GM12878 (cell line): ENCODE measurements at regions of chr20 and their contacts with region 1.

Region 1: GRCh38 chr20:32357869-32358631 is at the start of gene ASXL1:
- DNase-seq: peak; percentile 90
- ATAC-seq: peak; percentile 85
- H3K4me3 ChIP-seq: peak within 1 kb of the TSS; percentile 77
- H3K27ac ChIP-seq: peak within 1 kb of the TSS; percentile 91
- H3K4me1 ChIP-seq: peaks cover 29% of the 10 kb centered on the region
- H3K27me3 ChIP-seq: no peaks in the 10 kb centered on the region
- CTCF ChIP-seq: no peak
- EP300 ChIP-seq: no peak
- POLR2A ChIP-seq: peak; percentile 79
- RAD21 ChIP-seq: 0 out of 2 replicates have a peak, but pooled peaks have one; percentile 7
- polyA plus RNA-seq, gene ASXL1: 11.0 to 14.8 TPM

Region 2: DNA sequence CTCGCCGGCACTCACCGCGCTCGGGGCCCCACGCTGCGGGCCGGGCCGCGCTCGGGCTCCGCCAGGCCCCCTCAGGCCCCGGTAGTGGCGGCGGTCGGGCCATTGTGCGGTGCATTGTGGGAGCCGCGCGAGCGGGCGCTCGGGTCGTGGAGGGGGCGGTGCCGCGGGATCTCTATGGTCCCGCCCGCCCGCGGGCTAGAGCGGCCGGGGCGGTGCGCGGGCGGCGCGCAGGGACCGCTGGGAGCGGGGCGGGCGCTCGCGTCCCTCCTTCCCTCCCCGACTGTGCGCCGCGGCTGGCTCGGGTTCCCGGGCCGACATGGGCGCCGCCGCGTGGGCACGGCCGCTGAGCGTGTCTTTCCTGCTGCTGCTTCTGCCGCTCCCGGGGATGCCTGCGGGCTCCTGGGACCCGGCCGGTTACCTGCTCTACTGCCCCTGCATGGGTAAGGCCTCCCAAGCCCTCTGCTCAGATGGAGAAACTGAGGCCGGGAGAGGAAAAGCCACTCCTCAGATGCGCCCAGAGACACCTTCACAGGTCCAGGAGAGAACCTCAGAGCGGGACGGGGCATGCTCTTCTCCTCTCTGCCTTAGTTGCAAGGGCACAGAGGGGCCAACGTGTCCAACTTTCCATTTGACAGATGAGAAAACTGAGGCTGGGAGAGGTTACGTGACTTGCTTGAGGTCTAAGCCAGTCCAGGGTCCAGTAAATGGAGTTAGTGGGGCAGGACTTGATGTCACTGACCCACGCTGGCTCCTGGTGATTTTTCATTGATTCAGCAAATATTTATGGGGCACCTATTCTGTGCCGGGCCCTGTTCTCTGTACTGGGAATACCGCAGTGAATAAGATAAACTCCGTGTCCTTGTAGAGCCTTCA is 150.2 kb before region 1 on chr20 and contains the starts of genes PLAGL2 and POFUT1:
- CTCF ChIA-PET with region 1: interaction called, 3 read pairs
- POLR2A ChIA-PET with region 1: no interaction called
- RAD21 ChIA-PET with region 1: interaction called, 5 read pairs
- SMC1A ChIA-PET with region 1: interaction called, 3 read pairs
- in situ Hi-C with region 1: no loop called
- intact Hi-C with region 1: loop called (anchors 2 kb)
- DNase-seq: peak; percentile 37
- ATAC-seq: peak; percentile 92
- H3K4me3 ChIP-seq: peak within 1 kb of the TSS; percentile 99
- H3K27ac ChIP-seq: peak within 1 kb of the TSS; percentile 84
- H3K4me1 ChIP-seq: peaks cover 20% of the 10 kb centered on the region
- H3K27me3 ChIP-seq: no peaks in the 10 kb centered on the region
- CTCF ChIP-seq: peak in 2 of 3 experiments; percentile 20 to 25; a peak in 2 of 6 replicates
- EP300 ChIP-seq: peak in 1 of 2 experiments; percentile 58; a peak in 2 of 4 replicates
- POLR2A ChIP-seq: peak; percentile 92
- RAD21 ChIP-seq: no peak
- polyA plus RNA-seq, gene PLAGL2: 4.4 to 7.3 TPM
- polyA plus RNA-seq, gene POFUT1: 2.6 to 3.9 TPM

Region 3: DNA sequence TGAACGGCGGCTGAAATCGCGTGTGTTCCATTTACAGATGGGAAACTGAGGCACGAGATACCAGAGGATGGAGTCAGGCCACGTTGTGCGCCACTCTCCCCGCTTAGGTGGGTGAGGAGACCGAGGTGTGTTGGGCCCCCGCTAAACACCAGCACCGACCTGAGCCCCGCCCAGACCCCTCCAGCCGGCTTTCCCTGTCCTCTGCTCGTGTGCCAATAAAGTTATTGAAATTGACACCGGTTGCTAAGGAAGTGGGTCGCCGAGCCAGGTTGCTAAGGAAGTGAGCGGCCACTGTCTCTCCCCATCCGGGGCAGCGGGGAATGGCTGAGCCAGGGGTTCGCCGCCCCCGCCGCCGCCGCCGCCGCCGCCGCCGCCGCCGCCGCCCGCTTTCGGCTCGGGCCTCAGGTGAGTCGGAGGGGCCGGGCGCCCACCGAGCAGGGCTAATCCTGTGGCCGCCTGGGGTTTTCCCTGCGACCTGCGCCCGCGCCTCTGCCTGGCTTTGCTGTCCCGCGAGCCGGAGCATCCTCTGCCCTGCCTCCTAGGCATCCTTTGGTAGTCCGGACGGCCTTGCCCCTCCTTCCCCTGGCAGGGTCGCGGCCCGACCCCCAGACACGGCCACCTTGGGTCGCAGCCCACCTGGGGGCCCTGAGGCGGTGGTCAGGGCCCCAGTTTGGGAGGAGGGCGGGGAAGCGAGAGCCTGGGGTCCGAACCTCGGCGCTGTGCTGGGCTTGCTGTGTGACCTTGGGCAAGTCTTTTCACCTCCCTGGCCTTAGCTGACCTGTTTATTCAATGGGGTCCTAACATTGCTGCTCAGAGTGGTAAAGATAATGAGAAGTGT is 80.5 kb before region 1 on chr20 and contains the start of gene KIF3B:
- CTCF ChIA-PET with region 1: interaction called, 4 read pairs
- POLR2A ChIA-PET with region 1: interaction called, 7 read pairs
- RAD21 ChIA-PET with region 1: interaction called, 3 read pairs
- SMC1A ChIA-PET with region 1: interaction called, 4 read pairs
- in situ Hi-C with region 1: no loop called
- intact Hi-C with region 1: loop called (anchors 2 kb)
- DNase-seq: peak; percentile 61
- ATAC-seq: peak; percentile 84
- H3K4me3 ChIP-seq: peak within 1 kb of the TSS; percentile 98
- H3K27ac ChIP-seq: peak within 1 kb of the TSS; percentile 81
- H3K4me1 ChIP-seq: peaks cover 11% of the 10 kb centered on the region
- H3K27me3 ChIP-seq: no peaks in the 10 kb centered on the region
- CTCF ChIP-seq: no peak
- EP300 ChIP-seq: no peak; a peak in 1 of 4 replicates
- POLR2A ChIP-seq: peak; percentile 57; the same call in 1 of the 2 replicates
- RAD21 ChIP-seq: no peak
- polyA plus RNA-seq, gene KIF3B: 10.7 to 11.2 TPM

Region 4: DNA sequence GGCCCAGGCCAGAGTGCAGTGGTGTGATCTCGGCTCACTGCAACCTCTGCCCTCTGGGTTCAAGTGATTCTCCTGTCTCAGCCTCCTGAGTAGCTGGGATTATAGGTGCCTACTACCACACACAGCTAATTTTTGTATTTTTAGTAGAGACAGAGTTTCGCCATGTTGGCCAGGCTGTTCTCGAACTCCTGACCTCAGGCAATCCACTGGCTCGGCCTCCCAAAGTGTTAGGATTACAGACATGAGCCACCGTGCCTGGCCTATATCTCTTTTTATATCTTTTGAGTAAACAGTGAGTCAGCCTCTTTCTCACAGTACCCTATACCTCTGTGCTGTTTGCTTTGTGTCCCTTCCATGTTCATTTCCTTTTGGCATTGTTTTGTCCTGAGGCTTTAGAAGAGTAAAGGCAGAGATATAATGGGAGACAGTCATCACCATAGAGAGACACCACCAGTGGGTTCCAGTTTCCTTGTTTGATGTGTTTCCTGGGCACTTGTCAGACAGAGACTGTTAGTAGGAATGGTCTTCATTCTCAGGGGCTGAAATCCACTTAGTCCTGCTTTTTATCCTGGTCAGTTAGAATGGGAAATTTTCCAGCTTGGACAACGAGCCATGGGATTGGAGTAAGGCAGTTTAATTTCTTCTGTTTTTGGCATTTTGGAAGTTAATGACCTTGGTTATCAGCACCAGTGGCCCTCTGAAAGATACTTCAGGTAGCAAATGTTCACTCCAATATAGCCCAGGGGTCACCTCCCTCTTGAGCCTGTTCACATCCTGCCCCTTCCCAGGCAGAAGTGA is 32.1 kb before region 1 on chr20:
- CTCF ChIA-PET with region 1: no interaction called
- POLR2A ChIA-PET with region 1: no interaction called
- RAD21 ChIA-PET with region 1: no interaction called
- SMC1A ChIA-PET with region 1: no interaction called
- in situ Hi-C with region 1: no loop called
- intact Hi-C with region 1: no loop called
- DNase-seq: no peak
- ATAC-seq: no peak
- H3K4me3 ChIP-seq: no peak overlapping the region
- H3K27ac ChIP-seq: no peak overlapping the region
- H3K4me1 ChIP-seq: peaks cover 5% of the 10 kb centered on the region
- H3K27me3 ChIP-seq: no peaks in the 10 kb centered on the region
- CTCF ChIP-seq: no peak
- EP300 ChIP-seq: no peak
- POLR2A ChIP-seq: no peak
- RAD21 ChIP-seq: no peak

Region 5: GRCh38 chr20:32336918-32337347 is 21.1 kb before region 1 on chr20:
- CTCF ChIA-PET with region 1: interaction called, 6 read pairs
- POLR2A ChIA-PET with region 1: interaction called, 6 read pairs
- RAD21 ChIA-PET with region 1: interaction called, 13 read pairs
- SMC1A ChIA-PET with region 1: interaction called, 23 read pairs
- in situ Hi-C with region 1: no loop called
- intact Hi-C with region 1: loop called (anchors 1 kb)
- DNase-seq: no peak
- ATAC-seq: peak; percentile 58
- H3K4me3 ChIP-seq: no peak overlapping the region
- H3K27ac ChIP-seq: no peak overlapping the region
- H3K4me1 ChIP-seq: peaks cover 29% of the 10 kb centered on the region
- H3K27me3 ChIP-seq: no peaks in the 10 kb centered on the region
- CTCF ChIP-seq: peak; percentile 62 to 71 (median 65)
- EP300 ChIP-seq: no peak
- POLR2A ChIP-seq: no peak
- RAD21 ChIP-seq: peak; percentile 78

Region 6: GRCh38 chr20:32344835-32345506 is 13.1 kb before region 1 on chr20:
- CTCF ChIA-PET with region 1: interaction called, 10 read pairs
- POLR2A ChIA-PET with region 1: interaction called, 8 read pairs
- RAD21 ChIA-PET with region 1: interaction called, 3 read pairs
- SMC1A ChIA-PET with region 1: interaction called, 8 read pairs
- in situ Hi-C with region 1: no loop called
- intact Hi-C with region 1: no loop called
- DNase-seq: no peak
- ATAC-seq: peak; percentile 19; the same call in 1 of the 3 replicates
- H3K4me3 ChIP-seq: no peak overlapping the region
- H3K27ac ChIP-seq: no peak overlapping the region
- H3K4me1 ChIP-seq: no peaks in the 10 kb centered on the region
- H3K27me3 ChIP-seq: no peaks in the 10 kb centered on the region
- CTCF ChIP-seq: no peak
- EP300 ChIP-seq: no peak
- POLR2A ChIP-seq: no peak
- RAD21 ChIP-seq: no peak